ENCODE measurements at regions of chr2 and their contacts with region 1.

Region 1: DNA sequence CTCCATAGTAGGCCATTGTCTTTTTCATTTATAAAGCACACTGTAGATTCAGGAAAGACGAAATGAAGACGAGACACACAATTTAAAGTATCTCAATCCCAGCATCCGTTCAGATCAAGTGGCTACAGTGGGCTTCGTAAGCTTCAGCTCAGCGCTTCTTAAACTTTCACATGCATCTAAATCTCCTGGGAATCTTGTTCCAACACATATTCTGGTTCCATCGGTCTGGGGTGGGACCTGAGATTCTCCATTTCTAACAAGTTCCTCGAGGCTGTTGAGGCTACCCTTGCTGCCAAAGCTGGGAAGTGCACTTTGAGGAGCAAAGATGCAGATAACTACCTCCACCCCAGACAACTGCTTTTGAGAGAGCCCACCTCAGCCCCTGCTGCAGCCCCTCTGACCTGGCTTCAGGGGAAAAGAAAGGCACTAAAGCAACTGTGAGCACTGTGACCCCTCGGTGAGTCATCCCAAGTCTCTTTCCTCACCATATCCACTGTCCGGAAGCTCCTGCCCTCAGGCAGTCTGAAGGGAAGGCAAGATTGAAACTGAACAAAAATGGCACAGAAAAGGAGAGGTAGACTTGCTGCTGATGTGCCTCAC is 201.1 kb upstream of the FBXO11 start:
- DNase-seq: peak; percentile 67 to 69
- ATAC-seq: peak; percentile 19 to 26; a peak in 5 of 6 replicates
- H3K4me3 ChIP-seq: no peak overlapping the region
- H3K27ac ChIP-seq: peak overlapping the region; percentile 69 to 82
- H3K4me1 ChIP-seq: peaks cover 36% of the 10 kb centered on the region
- CTCF ChIP-seq: no peak
- EP300 ChIP-seq: no peak
- POLR2A ChIP-seq: no peak
- RAD21 ChIP-seq: no peak

Region 2: GRCh38 chr2:47782671-47783485 is 324.5 kb before region 1 on chr2 and contains the start of gene MSH6:
- CTCF ChIA-PET with region 1: interaction called, 5 read pairs
- POLR2A ChIA-PET with region 1: interaction called, 10 read pairs
- DNase-seq: peak; percentile 93 to 95
- ATAC-seq: peak; percentile 83 to 89
- H3K4me3 ChIP-seq: peak within 1 kb of the TSS; percentile 81
- H3K27ac ChIP-seq: peak within 1 kb of the TSS; percentile 89 to 91
- H3K4me1 ChIP-seq: peaks cover 15% of the 10 kb centered on the region; the same call in 2 of the 3 replicates
- CTCF ChIP-seq: no peak
- EP300 ChIP-seq: no peak
- POLR2A ChIP-seq: peak; percentile 63
- RAD21 ChIP-seq: no peak
- polyA plus RNA-seq, gene MSH6: 85.5 and 108 TPM in 2 replicates

Region 3: DNA sequence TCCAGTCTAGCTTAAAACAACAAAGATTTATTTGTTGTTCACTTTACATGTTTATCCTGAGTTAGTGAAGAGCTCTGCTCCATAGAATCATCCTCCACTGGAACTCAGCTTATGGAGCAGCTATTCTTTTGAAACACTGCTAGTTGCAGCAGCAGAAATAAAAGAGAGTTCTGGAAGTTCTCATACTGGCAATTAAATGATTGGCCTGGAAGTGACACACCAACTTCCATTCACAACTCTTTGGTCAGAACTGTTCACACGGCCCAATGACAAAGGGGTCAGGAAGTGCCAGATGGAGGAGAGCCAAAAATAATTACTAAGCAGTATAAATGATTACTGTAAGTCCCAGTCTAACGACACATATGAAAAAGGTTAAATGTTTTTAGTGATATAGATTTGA is 240.2 kb before region 1 on chr2:
- CTCF ChIA-PET with region 1: interaction called, 135 read pairs
- POLR2A ChIA-PET with region 1: no interaction called
- DNase-seq: peak in 1 of 2 experiments; percentile 24
- ATAC-seq: peak; percentile 41 to 60; a peak in 3 of 6 replicates
- H3K4me3 ChIP-seq: no peak overlapping the region
- H3K27ac ChIP-seq: peak overlapping the region in 1 of 2 experiments; percentile 3; a peak in 1 of 6 replicates
- H3K4me1 ChIP-seq: peaks cover 22% of the 10 kb centered on the region
- CTCF ChIP-seq: no peak
- EP300 ChIP-seq: no peak
- POLR2A ChIP-seq: no peak
- RAD21 ChIP-seq: no peak

Region 4: DNA sequence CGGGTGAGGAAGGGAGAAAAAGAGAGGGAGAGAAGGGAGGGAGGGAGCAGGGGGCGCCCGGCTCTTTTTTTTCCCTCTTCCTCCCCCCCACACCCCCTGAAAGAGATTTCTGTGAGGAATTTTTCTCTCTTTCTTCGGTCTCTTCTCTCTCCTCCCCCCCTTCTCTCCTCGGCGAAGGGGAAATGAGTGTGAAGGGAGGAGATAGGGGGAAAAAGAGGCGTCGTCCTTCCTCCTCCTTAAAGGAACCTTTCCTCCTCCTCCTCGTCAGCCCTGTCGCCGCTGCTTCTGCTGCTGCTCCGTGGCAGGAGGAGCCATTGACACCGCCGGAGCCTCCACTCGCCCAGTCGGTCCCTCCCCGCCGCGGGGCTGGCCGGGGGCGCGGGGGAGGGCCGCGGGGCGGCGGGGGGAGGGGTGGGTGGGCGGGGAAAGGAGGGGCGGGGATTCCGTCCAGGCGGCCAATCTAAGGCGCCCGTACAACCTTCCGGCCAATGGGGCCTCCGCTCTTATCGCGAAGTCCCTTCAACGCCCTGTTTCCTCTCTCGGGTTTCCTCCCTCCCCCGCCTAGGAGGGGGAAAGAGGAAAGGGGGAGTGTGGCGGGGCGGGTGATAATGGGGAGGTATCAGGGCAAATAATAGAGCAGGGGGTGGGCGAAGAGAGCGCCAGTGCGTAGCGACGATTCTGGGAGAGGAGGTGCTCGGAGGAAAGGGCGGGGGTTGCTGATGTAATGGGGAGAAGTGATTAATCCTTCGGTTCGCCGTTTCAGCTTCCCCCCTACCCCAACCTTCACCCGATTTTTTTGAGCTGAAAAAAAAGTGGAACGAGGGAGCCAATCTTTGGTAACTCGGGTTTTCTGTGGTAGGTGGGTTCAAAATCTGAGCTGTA is 201.0 kb before region 1 on chr2 and contains the start of gene FBXO11:
- CTCF ChIA-PET with region 1: interaction called, 21 read pairs
- POLR2A ChIA-PET with region 1: interaction called, 9 read pairs
- DNase-seq: peak; percentile 86 to 99
- ATAC-seq: peak; percentile 81 to 93
- H3K4me3 ChIP-seq: peak within 1 kb of the TSS; percentile 90
- H3K27ac ChIP-seq: peak within 1 kb of the TSS; percentile 98 to 99
- H3K4me1 ChIP-seq: peaks cover 22% of the 10 kb centered on the region
- CTCF ChIP-seq: peak; percentile 69; the same call in 2 of the 3 replicates
- EP300 ChIP-seq: 0 out of 5 replicates have a peak, but pooled peaks of 1 of the 2 experiments have one; percentile 27
- POLR2A ChIP-seq: peak; percentile 91
- RAD21 ChIP-seq: peak in 1 of 2 experiments; percentile 66; a peak in 2 of 5 replicates
- polyA plus RNA-seq, gene FBXO11: 61.4 and 125 TPM in 2 replicates

Region 5: GRCh38 chr2:48092846-48093803 is 14.3 kb before region 1 on chr2:
- CTCF ChIA-PET with region 1: interaction called, 34 read pairs
- POLR2A ChIA-PET with region 1: no interaction called
- DNase-seq: no peak
- ATAC-seq: no peak
- H3K4me3 ChIP-seq: no peak overlapping the region
- H3K27ac ChIP-seq: no peak overlapping the region
- H3K4me1 ChIP-seq: no peaks in the 10 kb centered on the region
- CTCF ChIP-seq: no peak
- EP300 ChIP-seq: no peak
- POLR2A ChIP-seq: no peak
- RAD21 ChIP-seq: no peak

Region 6: GRCh38 chr2:48420512-48421197 is 313.2 kb after region 1 on chr2:
- CTCF ChIA-PET with region 1: interaction called, 31 read pairs
- POLR2A ChIA-PET with region 1: no interaction called
- DNase-seq: peak; percentile 80 to 89
- ATAC-seq: peak; percentile 86 to 94
- H3K4me3 ChIP-seq: peak overlapping the region; percentile 14; the same call in 2 of the 3 replicates
- H3K27ac ChIP-seq: peak overlapping the region; percentile 75 to 85
- H3K4me1 ChIP-seq: peaks cover 23% of the 10 kb centered on the region
- CTCF ChIP-seq: peak; percentile 99
- EP300 ChIP-seq: 0 out of 5 replicates have a peak, but pooled peaks of 1 of the 2 experiments have one; percentile 25
- POLR2A ChIP-seq: no peak
- RAD21 ChIP-seq: peak; percentile 100

Measured in A549 (cell line).